Activated T-helper 1 cell treated with anti-CD3 and anti-CD28 coated beads, Interleukin-12 subunit alpha, Interleukin-12 subunit beta, Interleukin-2, Interleukin-4 antibody, amounts not matched to agents 30 ng/mL and 10 ng/mL and 1 ng/mL, durations not matched to agents 14 hours and 24 hours and 36 hours (primary cell): ENCODE measurements at regions of chr15 and their contacts with region 1.

Region 1: DNA sequence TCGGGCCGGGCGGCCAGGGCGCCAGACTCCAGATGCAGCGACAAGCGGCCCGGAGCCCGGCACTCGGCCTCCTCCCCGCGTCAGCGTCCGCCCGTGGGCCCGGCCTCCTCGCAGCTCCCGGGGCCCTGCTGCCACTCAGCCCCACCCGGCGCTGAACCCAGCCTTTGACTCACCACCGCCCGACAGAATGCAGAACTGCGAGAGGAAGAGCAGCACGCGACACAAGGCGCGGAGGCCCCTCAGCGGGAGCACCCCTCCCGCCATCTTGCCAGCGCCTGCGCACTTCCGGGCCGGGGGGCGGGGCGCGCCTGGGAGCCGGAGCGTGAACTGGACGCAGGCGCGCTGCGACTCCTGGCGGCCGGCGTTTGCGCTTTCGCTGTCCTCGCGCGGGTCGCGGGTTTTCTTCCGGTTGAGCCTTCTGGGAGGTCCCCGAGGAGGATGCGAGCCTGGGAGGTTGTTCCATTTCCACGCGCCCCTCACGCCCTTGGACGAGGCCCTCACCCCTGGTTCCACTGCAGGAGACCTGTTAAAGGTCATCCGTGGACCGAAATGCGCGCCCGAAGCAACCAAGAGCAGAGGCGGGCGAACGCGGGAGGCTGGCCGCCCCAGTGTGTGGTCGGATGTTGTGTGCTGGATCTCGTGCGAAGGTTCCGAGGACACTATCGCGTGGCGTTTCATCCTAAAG is at the start of gene TM2D3:
- DNase-seq: peak; percentile 94
- H3K4me3 Mint-ChIP-seq: peak within 1 kb of the TSS; percentile 93
- H3K27ac Mint-ChIP-seq: peak within 1 kb of the TSS; percentile 93
- H3K4me1 Mint-ChIP-seq: peaks cover 36% of the 10 kb centered on the region
- H3K27me3 Mint-ChIP-seq: no peaks in the 10 kb centered on the region
- total RNA-seq, gene TM2D3: 57.1 and 62.4 TPM in 2 replicates

Region 2: GRCh38 chr15:101723874-101724674 is 71.8 kb after region 1 on chr15 and contains the start of gene TARS3:
- intact Hi-C with region 1: loop called (anchors 1 kb)
- DNase-seq: peak; percentile 83
- H3K4me3 Mint-ChIP-seq: peak within 1 kb of the TSS; percentile 88
- H3K27ac Mint-ChIP-seq: peak within 1 kb of the TSS; percentile 95
- H3K4me1 Mint-ChIP-seq: peaks cover 30% of the 10 kb centered on the region
- H3K27me3 Mint-ChIP-seq: peaks cover under 1% of the 10 kb centered on the region
- total RNA-seq, gene TARS3: 13.9 and 15.2 TPM in 2 replicates